A673 (cell line): ENCODE measurements at regions of chr12 and their contacts with region 1.

Region 1: DNA sequence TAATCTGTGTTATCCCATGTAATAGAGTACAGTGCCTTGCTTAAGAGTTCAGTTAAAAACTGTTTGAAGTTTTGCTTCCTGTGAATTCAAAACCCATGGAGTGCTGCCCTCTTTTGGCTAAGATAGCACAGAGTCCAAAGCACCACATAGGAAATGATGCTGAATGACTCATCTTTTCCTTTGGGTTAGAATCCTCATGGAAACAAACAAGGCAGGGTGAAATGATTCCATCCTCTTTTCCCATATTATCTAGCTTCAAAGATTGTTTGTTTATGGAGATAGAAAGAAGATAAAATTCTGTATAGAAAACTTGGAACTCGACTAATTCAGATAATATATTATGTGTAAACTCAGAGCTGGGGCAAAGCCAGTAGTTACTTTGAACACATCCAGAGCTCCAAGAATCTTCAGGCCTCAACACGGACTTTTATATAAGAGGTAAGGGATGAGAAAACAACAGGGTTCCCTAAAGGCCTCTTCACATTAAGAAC is 87.4 kb downstream of the OTOGL start:
- DNase-seq: peak; percentile 93
- H3K4me3 ChIP-seq: no peak overlapping the region
- H3K27ac ChIP-seq: peak overlapping the region; percentile 65
- H3K4me1 ChIP-seq: peaks cover 20% of the 10 kb centered on the region
- H3K27me3 ChIP-seq: no peaks in the 10 kb centered on the region
- CTCF ChIP-seq: peak; percentile 90

Region 2: DNA sequence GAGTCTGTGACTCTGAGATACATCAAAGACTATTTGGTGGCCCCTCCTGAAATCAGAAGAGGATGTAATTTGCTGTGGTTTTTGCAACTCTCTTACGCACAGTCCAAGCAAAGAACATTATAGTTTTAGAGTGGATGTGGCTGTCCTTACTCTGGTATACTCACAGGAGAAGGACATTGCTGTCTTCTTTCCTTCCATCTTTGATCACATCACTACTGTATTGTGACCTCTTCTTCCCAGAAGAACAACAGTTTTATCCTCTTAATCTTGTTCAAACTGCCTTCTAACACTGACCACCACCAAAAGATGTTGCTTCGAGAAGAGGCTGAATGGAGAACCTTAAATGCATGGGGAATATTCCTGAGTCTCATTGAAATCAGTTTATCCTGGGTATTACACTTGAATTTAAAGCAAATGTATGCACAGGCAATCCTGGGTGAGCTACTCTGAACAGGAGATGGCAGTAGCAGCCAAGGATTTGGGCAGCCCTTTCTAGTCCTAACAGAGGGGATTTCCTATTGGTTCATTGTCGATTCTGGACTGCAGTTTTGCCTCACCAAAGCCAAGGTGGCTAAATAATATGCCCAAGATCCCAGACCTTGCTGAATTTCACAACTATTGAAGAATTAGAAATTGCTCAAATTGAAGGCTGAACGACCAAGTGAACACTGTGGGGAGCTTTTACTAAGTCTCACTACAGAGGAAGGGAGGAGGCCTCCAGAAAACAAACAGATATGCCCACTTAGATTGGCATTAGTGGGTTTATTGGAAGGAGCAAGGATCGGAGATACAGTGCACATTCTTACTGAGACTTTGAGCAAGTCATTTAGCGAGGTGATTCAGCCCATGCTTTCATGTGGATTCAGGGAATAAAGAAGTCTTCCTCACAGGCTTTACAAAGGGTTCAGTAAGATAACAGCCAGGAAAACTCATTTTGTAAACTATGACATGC is 778.8 kb before region 1 on chr12:
- CTCF ChIA-PET with region 1: no interaction called
- POLR2A ChIA-PET with region 1: no interaction called
- intact Hi-C with region 1: loop called (anchors 2 kb)
- DNase-seq: peak; percentile 81
- H3K4me3 ChIP-seq: no peak overlapping the region
- H3K27ac ChIP-seq: no peak overlapping the region
- H3K4me1 ChIP-seq: peaks cover 21% of the 10 kb centered on the region
- H3K27me3 ChIP-seq: no peaks in the 10 kb centered on the region
- CTCF ChIP-seq: peak; percentile 77

Region 3: GRCh38 chr12:79555028-79555930 is 631.5 kb before region 1 on chr12:
- CTCF ChIA-PET with region 1: no interaction called
- POLR2A ChIA-PET with region 1: no interaction called
- intact Hi-C with region 1: loop called (anchors 1 kb)
- DNase-seq: peak; percentile 57
- H3K4me3 ChIP-seq: no peak overlapping the region
- H3K27ac ChIP-seq: no peak overlapping the region
- H3K4me1 ChIP-seq: no peaks in the 10 kb centered on the region
- H3K27me3 ChIP-seq: no peaks in the 10 kb centered on the region
- CTCF ChIP-seq: peak; percentile 79

Region 4: GRCh38 chr12:79737875-79738718 is 448.7 kb before region 1 on chr12:
- CTCF ChIA-PET with region 1: no interaction called
- POLR2A ChIA-PET with region 1: no interaction called
- intact Hi-C with region 1: loop called (anchors 10 kb)
- DNase-seq: peak; percentile 72
- H3K4me3 ChIP-seq: no peak overlapping the region
- H3K27ac ChIP-seq: no peak overlapping the region
- H3K4me1 ChIP-seq: no peaks in the 10 kb centered on the region
- H3K27me3 ChIP-seq: no peaks in the 10 kb centered on the region
- CTCF ChIP-seq: peak; percentile 76

Region 5: DNA sequence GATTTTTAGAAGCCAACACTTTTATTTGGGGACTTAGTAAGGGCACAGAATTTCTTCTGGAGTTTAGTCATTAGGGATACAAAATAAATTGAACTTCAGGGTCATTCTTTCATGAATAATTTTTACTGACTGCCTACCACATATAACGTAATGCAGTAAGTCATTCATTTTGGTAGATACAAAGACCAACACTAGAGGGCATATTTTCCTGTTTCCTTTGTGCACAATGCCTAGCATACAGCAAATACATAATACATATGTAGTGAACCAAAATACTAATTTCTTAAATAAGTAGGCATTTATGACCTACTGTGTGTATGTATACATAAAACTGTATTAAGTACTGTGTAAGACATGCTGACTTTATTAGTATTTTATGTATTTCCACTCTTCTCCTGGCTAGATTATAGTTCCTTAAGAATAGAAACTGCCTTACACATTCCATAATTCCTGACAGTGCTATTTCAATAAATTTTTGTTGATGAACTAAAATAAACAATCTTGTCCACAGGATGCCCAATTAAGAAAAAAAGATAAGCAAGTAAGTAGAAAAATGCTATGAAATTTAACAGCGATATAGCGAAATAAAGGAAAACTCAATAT is 299.8 kb before region 1 on chr12:
- CTCF ChIA-PET with region 1: interaction called, 5 read pairs
- POLR2A ChIA-PET with region 1: no interaction called
- intact Hi-C with region 1: loop called (anchors 1 kb)
- DNase-seq: peak; percentile 71
- H3K4me3 ChIP-seq: no peak overlapping the region
- H3K27ac ChIP-seq: no peak overlapping the region
- H3K4me1 ChIP-seq: peaks cover 8% of the 10 kb centered on the region
- H3K27me3 ChIP-seq: no peaks in the 10 kb centered on the region
- CTCF ChIP-seq: peak; percentile 77